Activated CD4-positive, alpha-beta T cell treated with anti-CD3 and anti-CD28 coated beads, Interleukin-2, amount 10 ng/mL, durations not matched to agents 24 days and 14 days (primary cell): ENCODE measurements at regions of chr4 and their contacts with region 1.

Region 1: GRCh38 chr4:14787894-14788293 is 214.4 kb upstream of the CPEB2 start:
- DNase-seq: peak; percentile 57
- H3K4me3 Mint-ChIP-seq: no peak overlapping the region
- H3K27ac Mint-ChIP-seq: no peak overlapping the region
- H3K4me1 Mint-ChIP-seq: peaks cover 30% of the 10 kb centered on the region
- H3K27me3 Mint-ChIP-seq: no peaks in the 10 kb centered on the region

Region 2: GRCh38 chr4:14920759-14921320 is 132.9 kb after region 1 on chr4:
- intact Hi-C with region 1: loop called (anchors 10 kb)
- DNase-seq: peak; percentile 73
- H3K4me3 Mint-ChIP-seq: no peak overlapping the region
- H3K27ac Mint-ChIP-seq: no peak overlapping the region
- H3K4me1 Mint-ChIP-seq: no peaks in the 10 kb centered on the region
- H3K27me3 Mint-ChIP-seq: peaks cover 3% of the 10 kb centered on the region